ENCODE measurements at regions of chr11 and their contacts with region 1.

Region 1: GRCh38 chr11:75022759-75023396 is 34.1 kb downstream of the NEU3 start:
- DNase-seq: peak; percentile 82
- ATAC-seq: peak; percentile 94
- H3K4me3 Mint-ChIP-seq: no peak overlapping the region
- H3K27ac Mint-ChIP-seq: no peak overlapping the region
- H3K4me1 Mint-ChIP-seq: no peaks in the 10 kb centered on the region
- H3K27me3 Mint-ChIP-seq: no peaks in the 10 kb centered on the region
- CTCF ChIP-seq: peak; percentile 98

Region 2: DNA sequence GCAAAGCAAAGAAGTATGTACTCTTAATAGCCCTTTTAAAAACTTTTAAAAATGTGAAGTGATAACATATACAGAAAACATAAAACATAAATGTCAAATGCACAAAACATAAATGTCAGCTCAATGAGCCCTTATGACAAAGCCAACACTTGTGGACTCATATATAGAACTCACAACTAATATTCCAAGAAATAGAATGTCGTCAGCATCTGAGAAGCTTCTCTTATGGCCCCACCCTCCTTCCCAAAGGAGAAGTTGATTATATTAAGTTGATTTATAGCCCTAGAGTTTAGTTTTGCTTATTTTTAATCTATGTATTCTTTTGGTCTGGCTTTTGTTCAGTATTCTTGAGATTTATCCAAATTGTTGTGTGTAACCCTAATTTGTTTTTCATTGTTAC is 20.4 kb before region 1 on chr11:
- CTCF ChIA-PET with region 1: interaction called, 14 read pairs
- POLR2A ChIA-PET with region 1: no interaction called
- intact Hi-C with region 1: no loop called
- DNase-seq: no peak
- ATAC-seq: no peak
- H3K4me3 Mint-ChIP-seq: no peak overlapping the region
- H3K27ac Mint-ChIP-seq: no peak overlapping the region
- H3K4me1 Mint-ChIP-seq: peaks cover 2% of the 10 kb centered on the region
- H3K27me3 Mint-ChIP-seq: no peaks in the 10 kb centered on the region
- CTCF ChIP-seq: no peak

Region 3: GRCh38 chr11:75051043-75051442 is 28.2 kb after region 1 on chr11:
- CTCF ChIA-PET with region 1: interaction called, 11 read pairs
- POLR2A ChIA-PET with region 1: no interaction called
- intact Hi-C with region 1: no loop called
- DNase-seq: no peak
- ATAC-seq: no peak
- H3K4me3 Mint-ChIP-seq: no peak overlapping the region
- H3K27ac Mint-ChIP-seq: no peak overlapping the region
- H3K4me1 Mint-ChIP-seq: no peaks in the 10 kb centered on the region
- H3K27me3 Mint-ChIP-seq: peaks cover 7% of the 10 kb centered on the region
- CTCF ChIP-seq: no peak

Region 4: GRCh38 chr11:75078233-75078632 is 55.4 kb after region 1 on chr11:
- CTCF ChIA-PET with region 1: no interaction called
- POLR2A ChIA-PET with region 1: no interaction called
- intact Hi-C with region 1: no loop called
- DNase-seq: no peak
- ATAC-seq: no peak
- H3K4me3 Mint-ChIP-seq: no peak overlapping the region
- H3K27ac Mint-ChIP-seq: no peak overlapping the region
- H3K4me1 Mint-ChIP-seq: no peaks in the 10 kb centered on the region
- H3K27me3 Mint-ChIP-seq: peaks cover 12% of the 10 kb centered on the region
- CTCF ChIP-seq: no peak

Measured in activated CD8-positive, alpha-beta T cell treated with anti-CD3 and anti-CD28 coated beads for 36 hours (primary cell).